ENCODE measurements at regions of chr10 and their contacts with region 1.

Region 1: GRCh38 chr10:81116989-81117388 is 579.3 kb downstream of the SH2D4B start:
- DNase-seq: no peak
- ATAC-seq: no peak
- H3K4me3 ChIP-seq: no peak overlapping the region
- H3K27ac ChIP-seq: no peak overlapping the region
- H3K4me1 ChIP-seq: no peaks in the 10 kb centered on the region
- H3K27me3 ChIP-seq: no peaks in the 10 kb centered on the region
- CTCF ChIP-seq: no peak
- EP300 ChIP-seq: no peak
- POLR2A ChIP-seq: no peak
- RAD21 ChIP-seq: no peak

Region 2: DNA sequence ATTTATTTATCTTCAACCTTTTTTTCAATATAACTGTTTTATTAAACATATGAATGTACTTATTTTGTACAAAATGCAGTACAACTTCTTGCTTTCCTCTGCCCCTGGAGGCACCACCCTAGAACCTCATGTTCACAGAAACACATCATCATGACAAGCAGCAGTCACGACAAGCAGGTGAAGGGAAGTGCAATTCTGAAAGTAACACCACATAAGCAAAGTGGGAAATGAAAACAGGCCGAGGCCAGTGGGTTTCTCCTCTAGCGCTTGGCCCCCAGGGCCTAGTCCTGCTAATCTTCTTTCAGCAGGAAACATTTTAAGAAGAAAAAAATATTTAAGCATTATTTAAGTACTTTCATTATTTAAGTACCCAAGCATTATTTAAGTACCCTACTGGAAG is 18.9 kb after region 1 on chr10:
- CTCF ChIA-PET with region 1: no interaction called
- POLR2A ChIA-PET with region 1: no interaction called
- in situ Hi-C with region 1: no loop called
- intact Hi-C with region 1: loop called (anchors 1 kb)
- DNase-seq: no peak
- ATAC-seq: no peak
- H3K4me3 ChIP-seq: no peak overlapping the region
- H3K27ac ChIP-seq: no peak overlapping the region
- H3K4me1 ChIP-seq: no peaks in the 10 kb centered on the region
- H3K27me3 ChIP-seq: no peaks in the 10 kb centered on the region
- CTCF ChIP-seq: no peak
- EP300 ChIP-seq: no peak
- POLR2A ChIP-seq: no peak
- RAD21 ChIP-seq: no peak

Measured in K562 (cell line).